Upper lobe of right lung (tissue), 1 donor: ENCODE measurements at regions of chr1 and their contacts with region 1.

Region 1: GRCh38 chr1:160101037-160101716 is 2.8 kb upstream of the IGSF8 start:
- DNase-seq: peak; percentile 89
- ATAC-seq: peak; percentile 64
- H3K4me3 ChIP-seq: no peak overlapping the region
- H3K27ac ChIP-seq: peak overlapping the region; percentile 63
- H3K4me1 ChIP-seq: peaks cover 26% of the 10 kb centered on the region
- H3K27me3 ChIP-seq: no peaks in the 10 kb centered on the region
- CTCF ChIP-seq: peak; percentile 85

Region 2: DNA sequence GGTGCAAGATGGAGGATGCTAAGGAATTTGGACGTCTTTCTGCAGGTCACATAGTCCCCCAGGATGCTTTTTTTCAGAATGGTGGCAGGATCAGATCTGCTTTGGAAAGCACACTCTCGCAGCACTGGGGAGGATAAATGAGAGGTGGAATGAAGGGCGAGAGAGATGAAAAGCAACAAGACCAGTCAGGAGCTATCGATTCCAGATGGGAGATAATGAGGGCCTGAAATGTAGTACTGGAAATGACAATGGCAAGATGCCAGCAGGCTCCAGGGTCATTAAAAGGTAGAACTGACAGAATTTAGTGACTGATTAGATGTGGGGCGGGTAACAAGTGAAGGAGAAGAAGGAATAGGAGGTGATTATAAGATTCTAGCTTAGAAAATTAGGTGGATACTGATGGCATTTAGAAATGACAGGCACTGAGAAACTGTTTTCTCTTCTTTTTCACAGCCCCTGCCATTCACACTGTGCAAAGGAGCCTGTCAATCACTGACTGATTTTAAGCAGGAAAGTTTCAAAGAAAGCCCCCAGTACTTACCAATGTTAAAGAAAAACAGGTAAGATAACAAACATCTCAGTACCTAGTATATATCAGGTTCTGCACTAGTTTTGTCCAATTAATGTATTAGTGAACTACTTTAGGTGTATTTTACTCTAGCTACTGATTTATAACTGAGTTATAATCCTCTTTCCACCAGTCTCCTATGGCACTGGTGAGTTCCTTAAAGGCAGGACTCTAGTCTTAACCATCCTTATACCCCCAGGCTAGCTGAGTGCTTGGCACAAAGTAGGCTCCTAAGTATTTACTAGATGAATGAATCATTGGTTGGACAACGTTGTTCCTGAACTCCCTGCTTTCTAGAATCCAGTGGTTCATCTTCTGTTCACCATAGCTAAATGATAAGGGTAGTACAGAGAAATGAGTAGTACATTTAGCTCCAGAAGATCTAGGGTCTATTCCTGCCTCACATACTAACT is 78.6 kb before region 1 on chr1:
- intact Hi-C with region 1: no loop called
- DNase-seq: no peak
- ATAC-seq: no peak
- H3K4me3 ChIP-seq: no peak overlapping the region
- H3K27ac ChIP-seq: no peak overlapping the region
- H3K4me1 ChIP-seq: no peaks in the 10 kb centered on the region
- H3K27me3 ChIP-seq: no peaks in the 10 kb centered on the region
- CTCF ChIP-seq: no peak

Region 3: DNA sequence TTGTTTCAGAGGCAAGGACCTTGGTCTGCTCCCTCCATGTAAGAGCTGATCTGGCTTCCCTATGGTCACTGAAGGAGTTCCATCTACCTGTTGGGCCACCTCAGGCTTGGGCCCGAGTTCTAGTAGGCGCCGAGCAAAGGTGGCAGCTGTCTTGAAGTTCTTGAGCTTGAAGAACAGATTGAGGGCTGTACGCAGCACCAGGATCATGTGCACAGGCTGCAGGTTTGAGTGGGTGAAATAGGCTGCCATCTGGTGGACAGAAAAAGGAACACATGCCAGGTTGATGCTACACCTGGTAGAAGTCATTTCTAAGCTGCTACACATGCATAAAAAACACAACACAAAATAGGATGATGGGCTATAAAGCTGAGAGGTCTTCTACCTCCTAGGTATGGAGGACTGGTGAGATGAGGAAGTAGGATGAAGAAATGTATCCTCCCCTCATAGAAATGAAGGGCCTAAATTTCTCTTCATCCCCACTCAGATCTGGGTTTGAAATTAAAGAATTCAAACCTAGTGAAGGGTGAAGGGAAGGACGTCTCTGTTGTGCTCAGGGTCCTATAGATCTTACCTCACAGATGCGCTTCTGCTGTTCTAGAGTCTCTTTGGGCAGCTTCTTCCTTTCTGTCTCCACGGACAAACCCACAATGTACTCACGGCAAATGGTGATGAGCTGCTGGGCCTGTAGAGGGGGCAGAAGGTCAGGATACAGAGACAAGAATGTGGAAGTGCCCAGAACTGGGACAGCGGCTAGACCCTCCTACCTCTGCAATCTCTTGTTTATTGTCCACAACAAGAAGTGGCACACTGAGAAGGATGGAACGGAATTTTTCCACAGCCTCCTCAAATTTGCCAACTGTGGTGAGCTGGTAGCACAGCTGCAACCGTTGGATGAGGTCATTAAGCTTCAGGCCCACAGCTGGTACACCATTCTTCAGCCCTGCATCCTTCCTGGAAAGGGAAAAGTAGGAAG is 190.4 kb after region 1 on chr1:
- intact Hi-C with region 1: loop called (anchors 5 kb)
- DNase-seq: peak; percentile 69
- ATAC-seq: peak; percentile 95
- H3K4me3 ChIP-seq: no peak overlapping the region
- H3K27ac ChIP-seq: no peak overlapping the region
- H3K4me1 ChIP-seq: no peaks in the 10 kb centered on the region
- H3K27me3 ChIP-seq: no peaks in the 10 kb centered on the region
- CTCF ChIP-seq: peak; percentile 77